ENCODE measurements at regions of chr14 and their contacts with region 1.

Region 1: DNA sequence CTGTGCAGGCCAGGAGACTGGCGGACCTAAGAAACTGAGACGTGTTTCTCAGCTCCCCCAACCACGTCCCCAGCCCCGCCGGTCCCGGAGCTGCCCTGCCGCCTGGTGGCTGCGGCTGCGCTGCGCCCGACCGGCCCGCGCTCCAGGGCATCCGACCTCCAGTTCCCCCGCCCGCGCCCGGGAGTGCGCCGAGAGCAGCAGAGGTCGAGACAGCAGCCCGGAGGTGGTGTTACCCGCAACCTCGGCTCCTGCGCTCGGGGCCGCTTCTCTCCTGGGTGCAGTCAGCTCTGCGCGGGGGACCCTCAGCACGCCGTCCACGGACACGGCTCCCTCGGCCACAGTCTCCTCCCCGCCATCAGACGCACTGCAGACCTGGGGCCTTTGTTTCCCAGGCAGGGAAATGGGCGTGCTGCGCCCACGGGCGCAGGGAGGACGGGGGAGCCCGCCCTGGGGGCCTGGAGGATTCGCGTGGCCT is 21.6 kb upstream of the GPR132 start:
- DNase-seq: peak; percentile 68 to 84 (median 80)
- ATAC-seq: peak; percentile 32
- H3K4me3 ChIP-seq: no peak overlapping the region
- H3K27ac ChIP-seq: peak overlapping the region in 3 of 4 donors; percentile 62 to 75 (median 65)
- H3K4me1 ChIP-seq: peaks cover 53% of the 10 kb centered on the region
- H3K27me3 ChIP-seq: no peaks in the 10 kb centered on the region
- CTCF ChIP-seq: peak; percentile 63 to 91 (median 82)
- POLR2A ChIP-seq: peak in 1 of 3 donors; percentile 56

Region 2: GRCh38 chr14:105294142-105294597 is 207.3 kb after region 1 on chr14:
- intact Hi-C with region 1: loop called (anchors 10 kb)
- DNase-seq: peak in 3 of 4 donors; percentile 48 to 61 (median 59)
- ATAC-seq: peak; percentile 72
- H3K4me3 ChIP-seq: no peak overlapping the region
- H3K27ac ChIP-seq: peak overlapping the region in 1 of 4 donors; percentile 17
- H3K4me1 ChIP-seq: peaks cover 34% of the 10 kb centered on the region
- H3K27me3 ChIP-seq: no peaks in the 10 kb centered on the region
- CTCF ChIP-seq: no peak
- POLR2A ChIP-seq: no peak

Region 3: DNA sequence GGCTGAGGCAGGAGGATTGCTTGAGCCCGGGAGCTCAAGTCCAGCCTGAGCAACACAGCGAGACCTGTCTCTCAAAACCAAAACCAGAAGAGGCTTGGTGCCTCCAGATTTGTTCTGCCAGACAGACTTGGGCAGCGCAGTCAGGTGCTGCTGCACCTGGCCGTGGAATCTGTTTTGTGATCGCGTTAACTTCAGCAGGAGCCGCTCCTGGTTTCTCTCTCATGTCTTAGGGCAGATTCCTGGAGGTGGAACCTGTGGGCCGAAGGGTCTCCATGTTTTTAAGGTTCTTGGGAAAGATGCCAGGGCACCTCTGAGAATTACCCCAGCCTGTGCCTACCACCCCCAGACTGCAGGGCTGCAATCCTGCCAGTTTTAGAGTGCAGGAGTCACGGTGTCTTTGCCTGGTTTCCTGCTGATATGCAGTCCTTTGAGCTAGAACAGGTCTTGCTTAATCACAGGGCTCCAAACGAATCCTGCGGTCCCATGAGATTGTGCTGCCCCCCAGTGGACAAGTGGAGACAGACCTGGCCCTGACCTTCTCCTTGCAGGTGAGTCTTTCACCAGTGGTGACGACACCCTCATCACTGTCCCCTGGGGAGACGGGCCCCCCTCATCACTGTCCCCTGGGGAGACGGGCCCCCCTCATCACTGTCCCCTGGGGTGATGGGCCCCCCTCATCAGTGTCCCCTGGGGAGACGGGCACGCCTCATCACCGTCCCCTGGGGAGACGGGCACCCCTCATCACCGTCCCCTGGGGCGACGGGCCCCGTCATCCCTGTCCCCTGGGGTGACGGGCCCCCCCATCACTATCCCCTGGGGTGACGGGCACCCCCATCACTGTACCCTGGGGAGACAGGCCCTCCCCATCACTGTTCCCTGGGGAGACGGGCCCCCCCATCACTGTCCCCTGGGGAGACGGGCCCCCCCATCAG is 265.3 kb after region 1 on chr14:
- intact Hi-C with region 1: loop called (anchors 5 kb)
- DNase-seq: peak; percentile 91 to 93 (median 92)
- ATAC-seq: peak; percentile 98
- H3K4me3 ChIP-seq: no peak overlapping the region
- H3K27ac ChIP-seq: peak overlapping the region; percentile 43 to 65 (median 58)
- H3K4me1 ChIP-seq: peaks cover 8% of the 10 kb centered on the region
- H3K27me3 ChIP-seq: no peaks in the 10 kb centered on the region
- CTCF ChIP-seq: peak; percentile 72 to 97 (median 94)
- POLR2A ChIP-seq: no peak